HepG2 (cell line): ENCODE measurements at regions of chr3 and their contacts with region 1.

Region 1: DNA sequence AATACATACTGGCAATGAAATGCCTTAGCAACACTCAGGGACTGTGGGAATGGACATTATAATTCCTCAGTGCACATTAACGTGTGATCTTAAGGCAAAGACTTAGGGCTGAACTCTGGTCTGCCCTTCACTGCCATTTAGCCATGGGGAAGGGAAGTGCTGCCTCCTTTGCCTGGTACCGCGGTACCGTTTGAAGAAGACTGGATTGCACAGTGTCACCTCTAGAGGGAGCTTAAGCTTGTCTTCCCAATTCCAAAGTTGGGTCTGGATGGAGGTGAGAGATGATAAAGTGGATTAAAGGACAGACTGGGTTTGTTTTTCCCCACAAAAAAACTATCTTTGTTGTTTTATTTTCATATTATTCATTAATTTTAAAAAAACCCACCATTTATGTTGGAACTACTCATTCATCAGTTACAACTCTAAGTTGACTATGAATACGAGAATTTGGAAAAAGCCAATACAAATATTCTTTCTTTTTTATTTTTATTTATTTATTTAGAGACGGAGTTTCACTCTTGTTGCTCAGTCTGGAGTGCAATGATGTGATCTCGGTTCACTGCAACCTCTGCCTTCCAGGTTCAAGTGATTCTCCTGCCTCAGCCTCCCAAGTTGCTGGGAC is 60.0 kb upstream of the SYN2 start:
- DNase-seq: peak; percentile 37
- ATAC-seq: peak; percentile 92
- H3K4me3 ChIP-seq: no peak overlapping the region
- H3K27ac ChIP-seq: no peak overlapping the region
- H3K4me1 ChIP-seq: no peaks in the 10 kb centered on the region
- H3K27me3 ChIP-seq: 0 out of 5 replicates have a peak, but pooled peaks cover 0 to 4% of the 10 kb centered on the region in 2 experiments
- CTCF ChIP-seq: peak; percentile 80
- EP300 ChIP-seq: no peak
- POLR2A ChIP-seq: no peak
- RAD21 ChIP-seq: no peak

Region 2: GRCh38 chr3:11910971-11911531 is 33.1 kb before region 1 on chr3:
- CTCF ChIA-PET with region 1: no interaction called
- POLR2A ChIA-PET with region 1: no interaction called
- in situ Hi-C with region 1: no loop called
- intact Hi-C with region 1: no loop called
- DNase-seq: no peak
- ATAC-seq: peak; percentile 30; the same call in 1 of the 3 replicates
- H3K4me3 ChIP-seq: no peak overlapping the region
- H3K27ac ChIP-seq: no peak overlapping the region
- H3K4me1 ChIP-seq: peaks cover 6% of the 10 kb centered on the region
- H3K27me3 ChIP-seq: peaks cover 2 to 27% of the 10 kb centered on the region in 2 experiments
- CTCF ChIP-seq: no peak
- EP300 ChIP-seq: no peak
- POLR2A ChIP-seq: no peak
- RAD21 ChIP-seq: no peak

Region 3: GRCh38 chr3:12046406-12046805 is 102.2 kb after region 1 on chr3:
- CTCF ChIA-PET with region 1: no interaction called
- POLR2A ChIA-PET with region 1: no interaction called
- in situ Hi-C with region 1: no loop called
- intact Hi-C with region 1: loop called (anchors 2 kb)
- DNase-seq: no peak
- ATAC-seq: no peak
- H3K4me3 ChIP-seq: no peak overlapping the region
- H3K27ac ChIP-seq: no peak overlapping the region
- H3K4me1 ChIP-seq: no peaks in the 10 kb centered on the region
- H3K27me3 ChIP-seq: 0 out of 5 replicates have a peak, but pooled peaks cover 0 to 4% of the 10 kb centered on the region in 2 experiments
- CTCF ChIP-seq: peak; percentile 42
- EP300 ChIP-seq: no peak
- POLR2A ChIP-seq: no peak
- RAD21 ChIP-seq: no peak

Region 4: GRCh38 chr3:12444582-12445468 is 500.7 kb after region 1 on chr3:
- CTCF ChIA-PET with region 1: no interaction called
- POLR2A ChIA-PET with region 1: no interaction called
- in situ Hi-C with region 1: no loop called
- intact Hi-C with region 1: no loop called
- DNase-seq: peak; percentile 78
- ATAC-seq: peak; percentile 94
- H3K4me3 ChIP-seq: peak overlapping the region; percentile 39 to 53 (median 42)
- H3K27ac ChIP-seq: peak overlapping the region; percentile 93
- H3K4me1 ChIP-seq: peaks cover 47% of the 10 kb centered on the region
- H3K27me3 ChIP-seq: no peaks in the 10 kb centered on the region
- CTCF ChIP-seq: peak; percentile 40
- EP300 ChIP-seq: peak; percentile 19 to 64; a peak in 3 of 4 replicates
- POLR2A ChIP-seq: peak in 1 of 2 experiments; percentile 51; a peak in 3 of 4 replicates
- RAD21 ChIP-seq: peak; percentile 34